ENCODE measurements at regions of chr16 and their contacts with region 1.

Region 1: GRCh38 chr16:75464130-75464918 is at the start of gene TMEM170A:
- DNase-seq: peak; percentile 98 to 100
- H3K4me3 ChIP-seq: peak within 1 kb of the TSS; percentile 86 to 97
- H3K27ac ChIP-seq: peak within 1 kb of the TSS; percentile 93 to 96
- H3K4me1 ChIP-seq: peaks cover 0 to 7% of the 10 kb centered on the region in 2 donors
- H3K27me3 ChIP-seq: no peaks in the 10 kb centered on the region
- CTCF ChIP-seq: peak; percentile 100
- total RNA-seq, gene TMEM170A: 33.0 TPM

Region 2: GRCh38 chr16:75198135-75198600 is 266.2 kb before region 1 on chr16:
- intact Hi-C with region 1: loop called (anchors 1 kb)
- DNase-seq: no peak
- H3K4me3 ChIP-seq: no peak overlapping the region
- H3K27ac ChIP-seq: no peak overlapping the region
- H3K4me1 ChIP-seq: peaks cover 0 to 15% of the 10 kb centered on the region in 2 donors
- H3K27me3 ChIP-seq: no peaks in the 10 kb centered on the region
- CTCF ChIP-seq: no peak

Region 3: GRCh38 chr16:75432828-75433731 is 31.2 kb before region 1 on chr16 and contains the start of gene CFDP1:
- intact Hi-C with region 1: loop called (anchors 1 kb)
- DNase-seq: peak; percentile 78 to 97
- H3K4me3 ChIP-seq: peak within 1 kb of the TSS; percentile 90 to 91
- H3K27ac ChIP-seq: peak within 1 kb of the TSS; percentile 97 to 98
- H3K4me1 ChIP-seq: peaks cover 2 to 17% of the 10 kb centered on the region in 2 donors
- H3K27me3 ChIP-seq: no peaks in the 10 kb centered on the region
- CTCF ChIP-seq: no peak
- total RNA-seq, gene CFDP1: 8.3 TPM

Region 4: DNA sequence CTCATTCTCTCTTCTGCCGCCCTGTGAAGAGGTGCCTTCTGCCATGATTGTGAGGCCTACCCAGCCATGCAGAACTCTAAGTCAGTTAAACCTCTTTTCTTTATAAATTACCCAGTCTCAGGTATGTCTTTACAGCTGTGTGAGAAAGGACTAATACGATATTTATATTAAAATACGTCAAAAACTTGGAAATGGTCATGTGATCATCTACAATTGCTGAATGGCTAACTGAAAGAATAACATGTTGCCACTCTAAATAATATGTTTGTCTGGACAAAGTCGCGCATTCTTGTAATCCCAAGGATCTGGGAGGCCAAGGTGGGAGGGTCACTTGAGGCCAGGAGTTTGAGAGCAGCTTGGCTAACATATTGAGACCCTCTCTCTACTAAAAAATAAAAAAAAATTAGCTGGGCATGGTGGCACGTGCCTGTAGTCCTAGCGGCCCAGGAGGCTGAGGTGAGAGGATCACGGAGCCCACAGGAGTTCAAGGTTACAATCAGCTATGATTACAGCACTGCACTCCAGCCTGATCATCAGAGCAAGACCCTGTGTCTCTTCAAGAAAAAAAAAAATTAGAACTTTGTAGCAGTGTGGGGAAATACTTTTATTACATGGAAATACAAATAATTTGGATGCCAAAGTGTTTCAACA is 36.9 kb after region 1 on chr16:
- intact Hi-C with region 1: loop called (anchors 2 kb)
- DNase-seq: no peak
- H3K4me3 ChIP-seq: peak overlapping the region in 1 of 2 donors; percentile 28
- H3K27ac ChIP-seq: peak overlapping the region; percentile 53 to 73
- H3K4me1 ChIP-seq: peaks cover 6 to 20% of the 10 kb centered on the region in 2 donors
- H3K27me3 ChIP-seq: no peaks in the 10 kb centered on the region
- CTCF ChIP-seq: no peak

Region 5: DNA sequence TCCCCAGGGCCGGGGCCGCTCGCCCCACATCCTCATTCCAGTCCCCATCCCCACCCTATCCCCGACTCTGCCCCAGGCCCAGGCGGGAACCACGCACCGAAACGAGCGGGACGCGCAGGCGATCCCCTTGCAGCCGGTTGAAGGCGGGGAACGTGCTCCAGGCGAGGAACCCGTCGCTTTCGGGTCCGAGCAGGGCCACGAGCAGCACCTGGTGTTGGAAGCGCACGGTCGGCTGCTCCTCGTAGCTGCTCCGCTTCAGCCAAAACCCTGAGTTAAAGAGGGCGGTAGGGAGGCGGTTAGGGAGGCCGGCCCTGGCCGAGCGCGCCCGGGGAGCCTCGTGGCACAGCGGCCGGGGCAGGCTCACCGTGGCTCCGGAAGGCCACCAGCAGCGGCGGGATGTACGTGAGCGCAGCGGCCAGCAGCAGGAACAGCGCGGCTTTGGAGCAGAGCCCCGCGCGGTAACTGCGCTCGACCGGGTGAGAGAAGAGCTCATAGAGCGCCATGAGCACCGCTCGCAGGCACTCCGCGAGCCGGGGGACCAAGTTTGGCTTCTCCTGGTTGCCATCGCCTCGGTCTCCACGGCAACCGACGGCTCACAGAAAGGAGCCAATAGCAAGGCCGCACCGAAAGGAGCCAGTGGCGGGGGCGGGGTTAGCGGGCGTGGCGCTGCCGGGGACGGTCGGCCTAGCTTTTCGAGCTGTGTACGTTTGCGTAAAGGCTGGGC is 91.5 kb after region 1 on chr16 and contains the start of gene TMEM231:
- intact Hi-C with region 1: loop called (anchors 5 kb)
- DNase-seq: peak; percentile 91 to 99
- H3K4me3 ChIP-seq: peak within 1 kb of the TSS; percentile 64 to 84
- H3K27ac ChIP-seq: peak within 1 kb of the TSS; percentile 63 to 80
- H3K4me1 ChIP-seq: peaks cover 0 to 5% of the 10 kb centered on the region in 2 donors
- H3K27me3 ChIP-seq: no peaks in the 10 kb centered on the region
- CTCF ChIP-seq: no peak
- total RNA-seq, gene TMEM231: 59.9 TPM

Region 6: GRCh38 chr16:75647492-75648264 is 183.4 kb after region 1 on chr16 and contains the starts of genes KARS1 and TERF2IP:
- intact Hi-C with region 1: loop called (anchors 1 kb)
- DNase-seq: peak; percentile 75 to 95
- H3K4me3 ChIP-seq: peak within 1 kb of the TSS; percentile 96 to 97
- H3K27ac ChIP-seq: peak within 1 kb of the TSS; percentile 96 to 97
- H3K4me1 ChIP-seq: peaks cover 9 to 32% of the 10 kb centered on the region in 2 donors
- H3K27me3 ChIP-seq: no peaks in the 10 kb centered on the region
- CTCF ChIP-seq: no peak
- total RNA-seq, gene KARS1: 65.2 TPM
- total RNA-seq, gene TERF2IP: 41.0 TPM